ENCODE measurements at regions of chr9 and their contacts with region 1.

Region 1: GRCh38 chr9:73269430-73270101 is 117.9 kb downstream of the ANXA1 start:
- H3K4me3 ChIP-seq: no peak overlapping the region
- H3K27ac ChIP-seq: no peak overlapping the region
- H3K4me1 ChIP-seq: no peaks in the 10 kb centered on the region
- CTCF ChIP-seq: no peak

Region 2: GRCh38 chr9:72661401-72662135 is 608.0 kb before region 1 on chr9:
- CTCF ChIA-PET with region 1: no interaction called
- POLR2A ChIA-PET with region 1: no interaction called
- H3K4me3 ChIP-seq: no peak overlapping the region
- H3K27ac ChIP-seq: no peak overlapping the region
- H3K4me1 ChIP-seq: no peaks in the 10 kb centered on the region
- CTCF ChIP-seq: no peak

Region 3: DNA sequence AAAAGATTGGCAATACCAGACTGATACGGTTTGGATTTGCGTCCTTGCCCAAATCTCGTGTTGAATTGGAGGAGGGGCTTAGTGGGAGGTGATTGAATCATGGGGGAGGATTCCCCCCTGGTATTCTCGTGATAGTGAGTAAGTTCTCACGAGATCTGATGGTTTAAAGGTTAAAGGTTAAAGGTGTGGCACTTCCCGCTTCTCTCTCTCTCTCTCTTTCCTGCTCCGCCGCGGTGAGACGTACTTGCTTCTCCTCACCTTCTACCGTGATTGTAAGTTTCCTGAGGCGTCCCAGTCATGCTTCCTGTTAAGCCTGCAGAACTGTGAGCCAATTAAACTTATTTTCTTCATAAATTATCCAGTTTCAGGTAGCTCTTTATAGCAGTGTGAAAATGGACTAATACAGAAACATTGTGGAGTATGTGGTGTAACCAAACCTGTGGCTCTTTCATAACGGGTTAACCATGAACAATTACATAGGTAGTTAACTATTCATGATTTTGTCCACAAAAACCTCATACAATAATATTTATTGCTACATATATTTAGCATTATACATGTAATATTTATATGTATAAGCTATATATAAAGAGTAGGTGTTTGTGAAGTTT is 10.4 kb before region 1 on chr9:
- CTCF ChIA-PET with region 1: interaction called, 12 read pairs
- POLR2A ChIA-PET with region 1: no interaction called
- H3K4me3 ChIP-seq: no peak overlapping the region
- H3K27ac ChIP-seq: no peak overlapping the region
- H3K4me1 ChIP-seq: no peaks in the 10 kb centered on the region
- CTCF ChIP-seq: no peak

Region 4: GRCh38 chr9:73280113-73280512 is 10.5 kb after region 1 on chr9:
- CTCF ChIA-PET with region 1: interaction called, 15 read pairs
- POLR2A ChIA-PET with region 1: no interaction called
- H3K4me3 ChIP-seq: no peak overlapping the region
- H3K27ac ChIP-seq: no peak overlapping the region
- H3K4me1 ChIP-seq: no peaks in the 10 kb centered on the region
- CTCF ChIP-seq: no peak